Activated T-helper 2 cell treated with anti-CD3 and anti-CD28 coated beads, Interferon-gamma antibody, Interleukin-2, Interleukin-4, amounts not matched to agents 10 μg/mL and 5 μg/mL and 100 μg/mL, durations not matched to agents 14 hours and 24 hours and 36 hours (primary cell): ENCODE measurements at regions of chr7 and their contacts with region 1.

Region 1: DNA sequence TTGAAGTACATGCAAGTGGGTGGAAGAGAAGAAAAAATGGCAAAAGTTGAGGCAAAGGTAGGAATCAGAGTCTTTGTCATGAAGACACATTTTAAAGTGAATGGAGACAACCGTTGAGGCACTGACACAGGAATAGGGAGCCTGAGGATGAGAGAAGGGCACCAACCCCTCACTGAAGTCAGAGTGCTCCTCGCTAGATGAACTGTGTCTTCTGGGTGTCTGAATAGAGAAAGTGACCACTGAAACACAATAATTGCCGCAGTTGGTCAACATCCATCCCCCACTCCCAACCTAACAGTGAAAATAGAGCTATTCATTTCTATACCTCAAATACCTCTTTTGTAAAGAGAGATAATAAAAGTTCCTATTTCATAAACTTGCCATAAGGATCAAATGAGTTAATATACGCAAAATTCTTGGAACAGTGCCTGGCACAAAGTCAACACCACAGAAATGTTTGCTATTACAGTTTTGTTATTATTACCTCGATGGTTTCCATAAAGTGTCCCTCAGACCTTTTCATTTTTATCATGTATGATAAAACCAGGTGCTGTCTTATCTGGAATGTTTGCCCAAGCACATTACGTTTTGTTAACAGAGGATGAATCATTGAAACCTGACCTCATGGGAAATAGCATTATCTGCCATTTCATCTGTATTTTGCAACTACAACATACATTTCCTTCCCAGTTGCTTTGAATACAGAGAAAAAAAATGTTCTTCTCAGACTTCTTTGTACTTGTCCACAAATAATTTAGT is 61.8 kb upstream of the SP4 start:
- DNase-seq: no peak
- H3K4me3 Mint-ChIP-seq: no peak overlapping the region
- H3K27ac Mint-ChIP-seq: peak overlapping the region; percentile 25
- H3K4me1 Mint-ChIP-seq: peaks cover 56% of the 10 kb centered on the region
- H3K27me3 Mint-ChIP-seq: no peaks in the 10 kb centered on the region

Region 2: GRCh38 chr7:21383227-21384220 is 17.5 kb after region 1 on chr7:
- intact Hi-C with region 1: loop called (anchors 2 kb)
- DNase-seq: no peak
- H3K4me3 Mint-ChIP-seq: peak overlapping the region; percentile 51
- H3K27ac Mint-ChIP-seq: peak overlapping the region; percentile 64
- H3K4me1 Mint-ChIP-seq: peaks cover 35% of the 10 kb centered on the region
- H3K27me3 Mint-ChIP-seq: peaks cover 2% of the 10 kb centered on the region

Region 3: DNA sequence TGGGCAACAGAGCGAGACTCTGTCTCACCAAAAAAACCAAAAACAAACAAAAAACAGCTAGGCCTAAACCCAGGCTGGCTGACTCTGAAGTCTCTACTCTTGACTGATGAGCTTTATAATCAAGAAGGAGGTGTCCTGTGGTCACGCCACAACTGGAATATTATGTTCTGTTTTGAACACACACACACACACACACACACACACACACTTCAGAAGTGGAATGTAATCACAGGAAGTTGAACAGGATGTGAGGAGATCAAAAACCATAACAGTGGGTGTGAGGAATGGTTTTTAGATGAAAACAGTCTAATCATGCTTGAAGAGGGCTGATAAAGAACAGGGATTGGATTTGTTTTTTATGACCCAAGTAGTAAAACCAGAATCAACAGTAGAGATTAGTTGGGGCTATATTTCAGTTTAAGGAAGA is 1309.9 kb after region 1 on chr7:
- intact Hi-C with region 1: loop called (anchors 5 kb)
- DNase-seq: peak; percentile 63
- H3K4me3 Mint-ChIP-seq: no peak overlapping the region
- H3K27ac Mint-ChIP-seq: peak overlapping the region; percentile 54
- H3K4me1 Mint-ChIP-seq: peaks cover 84% of the 10 kb centered on the region
- H3K27me3 Mint-ChIP-seq: peaks cover 2% of the 10 kb centered on the region